Natural killer cell (primary cell): ENCODE measurements at regions of chr6 and their contacts with region 1.

Region 1: GRCh38 chr6:158072083-158072721 is 90.5 kb downstream of the SYNJ2 start:
- DNase-seq: peak; percentile 57 to 75
- ATAC-seq: peak; percentile 75 to 86 (median 76)
- H3K4me3 ChIP-seq: no peak overlapping the region
- H3K4me3 Mint-ChIP-seq: no peak overlapping the region
- H3K27ac ChIP-seq: no peak overlapping the region
- H3K27ac Mint-ChIP-seq: peak overlapping the region in 1 of 2 donors; percentile 50
- H3K4me1 ChIP-seq: peaks cover 11% of the 10 kb centered on the region
- H3K4me1 Mint-ChIP-seq: peaks cover 17 to 24% of the 10 kb centered on the region in 2 donors
- H3K27me3 ChIP-seq: no peaks in the 10 kb centered on the region
- H3K27me3 Mint-ChIP-seq: no peaks in the 10 kb centered on the region
- CTCF ChIP-seq: peak; percentile 86

Region 2: GRCh38 chr6:157756708-157757429 is 315.3 kb before region 1 on chr6:
- intact Hi-C with region 1: loop called (anchors 1 kb)
- DNase-seq: peak; percentile 71 to 89
- ATAC-seq: peak; percentile 81 to 94 (median 93)
- H3K4me3 ChIP-seq: no peak overlapping the region
- H3K4me3 Mint-ChIP-seq: no peak overlapping the region
- H3K27ac ChIP-seq: no peak overlapping the region
- H3K27ac Mint-ChIP-seq: no peak overlapping the region
- H3K4me1 ChIP-seq: peaks cover 11% of the 10 kb centered on the region
- H3K4me1 Mint-ChIP-seq: peaks cover 4 to 10% of the 10 kb centered on the region in 2 donors
- H3K27me3 ChIP-seq: no peaks in the 10 kb centered on the region
- H3K27me3 Mint-ChIP-seq: peaks cover 29 to 66% of the 10 kb centered on the region in 2 donors
- CTCF ChIP-seq: peak; percentile 79

Region 3: GRCh38 chr6:157981395-157982296 is 90.6 kb before region 1 on chr6 and contains the start of gene SYNJ2:
- intact Hi-C with region 1: loop called (anchors 1 kb)
- DNase-seq: peak; percentile 67 to 91
- ATAC-seq: peak; percentile 80 to 90 (median 83)
- H3K4me3 ChIP-seq: peak within 1 kb of the TSS; percentile 63
- H3K4me3 Mint-ChIP-seq: peak within 1 kb of the TSS; percentile 87
- H3K27ac ChIP-seq: no peak within 1 kb of the TSS
- H3K27ac Mint-ChIP-seq: peak within 1 kb of the TSS; percentile 65 to 77
- H3K4me1 ChIP-seq: peaks cover 40% of the 10 kb centered on the region
- H3K4me1 Mint-ChIP-seq: peaks cover 48 to 49% of the 10 kb centered on the region in 2 donors
- H3K27me3 ChIP-seq: no peaks in the 10 kb centered on the region
- H3K27me3 Mint-ChIP-seq: no peaks in the 10 kb centered on the region
- CTCF ChIP-seq: peak; percentile 52
- total RNA-seq, gene SYNJ2: 24.4 to 47.0 (median 28.0) TPM

Region 4: DNA sequence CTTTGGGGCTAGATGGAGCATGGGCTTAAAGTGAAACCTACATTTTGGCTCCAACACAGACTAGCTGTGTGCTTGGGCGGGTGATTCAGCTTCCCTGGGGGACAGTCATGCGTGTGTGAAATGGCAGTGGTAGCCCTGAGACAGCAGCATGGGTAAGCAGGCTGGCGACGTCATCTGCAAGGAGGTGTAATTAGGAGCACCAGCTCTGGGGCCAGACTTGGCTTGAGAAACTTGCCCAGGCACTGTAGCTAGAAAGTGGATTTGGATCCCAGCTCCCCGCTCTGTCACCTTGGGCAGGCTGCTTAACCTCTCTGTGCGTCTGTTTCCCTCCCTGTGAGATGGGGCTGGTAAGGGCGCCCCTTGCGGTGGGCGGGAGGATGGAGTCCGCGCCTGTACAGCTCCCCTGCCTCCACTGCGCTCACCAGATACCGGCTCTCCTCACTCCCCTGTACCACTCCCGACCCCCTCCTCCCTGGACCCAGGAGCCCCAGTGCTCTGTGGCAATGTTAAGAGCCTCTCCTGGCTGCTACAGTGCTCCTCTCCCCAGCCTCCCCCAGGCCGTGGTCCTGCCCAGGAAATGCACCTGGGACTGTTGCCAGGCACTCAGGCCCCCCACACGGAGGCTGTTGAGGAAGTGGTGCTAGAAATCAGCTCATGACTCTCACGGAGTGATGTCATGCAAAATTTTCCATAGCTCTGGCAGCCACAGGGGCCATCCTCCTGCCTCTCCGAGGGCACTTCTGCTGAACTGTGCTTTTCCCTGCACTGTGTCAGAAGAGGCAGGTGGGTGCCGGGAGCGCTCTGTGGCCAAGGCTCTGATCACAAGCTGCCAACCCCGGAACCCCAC is 45.9 kb before region 1 on chr6:
- intact Hi-C with region 1: loop called (anchors 1 kb)
- DNase-seq: peak; percentile 64 to 90
- ATAC-seq: peak; percentile 71 to 83 (median 78)
- H3K4me3 ChIP-seq: peak overlapping the region; percentile 26
- H3K4me3 Mint-ChIP-seq: peak overlapping the region; percentile 75
- H3K27ac ChIP-seq: peak overlapping the region; percentile 81
- H3K27ac Mint-ChIP-seq: peak overlapping the region; percentile 89 to 98
- H3K4me1 ChIP-seq: peaks cover 34% of the 10 kb centered on the region
- H3K4me1 Mint-ChIP-seq: peaks cover 29 to 35% of the 10 kb centered on the region in 2 donors
- H3K27me3 ChIP-seq: no peaks in the 10 kb centered on the region
- H3K27me3 Mint-ChIP-seq: no peaks in the 10 kb centered on the region
- CTCF ChIP-seq: peak; percentile 76